Activated T-helper 1 cell treated with anti-CD3 and anti-CD28 coated beads, Interleukin-12 subunit alpha, Interleukin-12 subunit beta, Interleukin-2, Interleukin-4 antibody, amounts not matched to agents 30 ng/mL and 10 ng/mL and 1 ng/mL, durations not matched to agents 14 hours and 24 hours and 36 hours (primary cell): ENCODE measurements at regions of chr7 and their contacts with region 1.

Region 1: GRCh38 chr7:37352974-37353948 is 95.4 kb downstream of the ELMO1 start:
- DNase-seq: peak; percentile 71
- H3K4me3 Mint-ChIP-seq: peak overlapping the region; percentile 93
- H3K27ac Mint-ChIP-seq: peak overlapping the region; percentile 97
- H3K4me1 Mint-ChIP-seq: peaks cover 90% of the 10 kb centered on the region
- H3K27me3 Mint-ChIP-seq: no peaks in the 10 kb centered on the region

Region 2: GRCh38 chr7:36487756-36488336 is 865.4 kb before region 1 on chr7:
- intact Hi-C with region 1: loop called (anchors 5 kb)
- DNase-seq: peak; percentile 26
- H3K4me3 Mint-ChIP-seq: no peak overlapping the region
- H3K27ac Mint-ChIP-seq: no peak overlapping the region
- H3K4me1 Mint-ChIP-seq: peaks cover 5% of the 10 kb centered on the region
- H3K27me3 Mint-ChIP-seq: peaks cover 4% of the 10 kb centered on the region

Region 3: DNA sequence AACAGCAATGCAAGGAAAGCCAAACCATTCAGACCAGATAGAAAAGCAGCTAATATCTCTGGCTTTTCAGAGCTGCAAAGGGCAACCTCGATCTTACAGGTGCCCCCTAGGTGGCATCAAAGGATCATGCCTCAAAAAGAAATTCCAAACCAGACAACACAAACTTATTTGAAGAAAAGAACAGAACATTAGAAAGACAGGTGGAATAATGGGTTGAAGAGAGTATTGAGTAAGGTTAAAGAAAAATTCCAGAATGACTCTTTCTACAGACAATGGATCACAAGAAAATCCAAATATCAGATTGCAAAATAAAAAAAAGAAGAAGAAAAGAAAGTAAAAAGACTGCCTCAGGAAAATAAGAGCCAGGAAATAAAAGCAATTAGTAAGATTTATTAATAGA is 118.3 kb before region 1 on chr7:
- intact Hi-C with region 1: loop called (anchors 1 kb)
- DNase-seq: no peak
- H3K4me3 Mint-ChIP-seq: no peak overlapping the region
- H3K27ac Mint-ChIP-seq: no peak overlapping the region
- H3K4me1 Mint-ChIP-seq: peaks cover 11% of the 10 kb centered on the region
- H3K27me3 Mint-ChIP-seq: no peaks in the 10 kb centered on the region

Region 4: GRCh38 chr7:37342688-37343471 is 10.4 kb before region 1 on chr7:
- intact Hi-C with region 1: loop called (anchors 1 kb)
- DNase-seq: peak; percentile 62
- H3K4me3 Mint-ChIP-seq: peak overlapping the region; percentile 96
- H3K27ac Mint-ChIP-seq: peak overlapping the region; percentile 99
- H3K4me1 Mint-ChIP-seq: peaks cover 76% of the 10 kb centered on the region
- H3K27me3 Mint-ChIP-seq: no peaks in the 10 kb centered on the region

Region 5: DNA sequence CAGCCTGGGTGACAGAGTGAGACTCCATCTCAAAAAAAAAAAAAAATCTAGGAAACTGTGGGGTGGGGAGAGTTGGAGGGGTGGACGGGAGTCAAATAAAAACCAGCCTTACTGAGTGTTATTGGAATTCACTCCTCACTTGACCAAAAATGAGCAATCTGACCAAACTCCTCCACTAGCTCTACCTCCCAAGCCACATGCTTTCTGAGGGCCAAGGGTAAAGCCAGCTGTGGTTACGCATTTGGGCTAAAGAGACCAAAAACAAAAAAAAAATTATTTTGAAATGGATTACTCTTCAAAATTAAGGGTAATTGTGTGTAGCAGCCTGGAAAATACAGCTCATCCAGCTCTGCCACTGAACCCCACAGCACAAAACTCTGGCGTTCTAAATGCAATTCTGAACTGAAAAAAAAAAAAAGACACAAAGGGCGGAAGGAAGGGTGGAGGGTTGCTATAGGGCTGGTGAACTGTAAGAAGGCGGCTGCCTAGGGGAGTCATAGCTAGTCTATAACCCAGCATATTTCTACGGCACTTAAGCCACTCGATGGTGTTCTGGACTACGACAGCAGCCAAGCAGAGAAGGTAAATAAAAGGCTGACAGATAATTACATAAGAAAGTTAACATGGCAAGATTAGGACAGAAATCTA is 87.6 kb after region 1 on chr7:
- intact Hi-C with region 1: loop called (anchors 1 kb)
- DNase-seq: peak; percentile 27
- H3K4me3 Mint-ChIP-seq: peak overlapping the region; percentile 66
- H3K27ac Mint-ChIP-seq: peak overlapping the region; percentile 95
- H3K4me1 Mint-ChIP-seq: peaks cover 64% of the 10 kb centered on the region
- H3K27me3 Mint-ChIP-seq: no peaks in the 10 kb centered on the region

Region 6: GRCh38 chr7:37598824-37599223 is 245.6 kb after region 1 on chr7:
- intact Hi-C with region 1: no loop called
- DNase-seq: no peak
- H3K4me3 Mint-ChIP-seq: no peak overlapping the region
- H3K27ac Mint-ChIP-seq: no peak overlapping the region
- H3K4me1 Mint-ChIP-seq: no peaks in the 10 kb centered on the region
- H3K27me3 Mint-ChIP-seq: peaks cover 8% of the 10 kb centered on the region

Region 7: DNA sequence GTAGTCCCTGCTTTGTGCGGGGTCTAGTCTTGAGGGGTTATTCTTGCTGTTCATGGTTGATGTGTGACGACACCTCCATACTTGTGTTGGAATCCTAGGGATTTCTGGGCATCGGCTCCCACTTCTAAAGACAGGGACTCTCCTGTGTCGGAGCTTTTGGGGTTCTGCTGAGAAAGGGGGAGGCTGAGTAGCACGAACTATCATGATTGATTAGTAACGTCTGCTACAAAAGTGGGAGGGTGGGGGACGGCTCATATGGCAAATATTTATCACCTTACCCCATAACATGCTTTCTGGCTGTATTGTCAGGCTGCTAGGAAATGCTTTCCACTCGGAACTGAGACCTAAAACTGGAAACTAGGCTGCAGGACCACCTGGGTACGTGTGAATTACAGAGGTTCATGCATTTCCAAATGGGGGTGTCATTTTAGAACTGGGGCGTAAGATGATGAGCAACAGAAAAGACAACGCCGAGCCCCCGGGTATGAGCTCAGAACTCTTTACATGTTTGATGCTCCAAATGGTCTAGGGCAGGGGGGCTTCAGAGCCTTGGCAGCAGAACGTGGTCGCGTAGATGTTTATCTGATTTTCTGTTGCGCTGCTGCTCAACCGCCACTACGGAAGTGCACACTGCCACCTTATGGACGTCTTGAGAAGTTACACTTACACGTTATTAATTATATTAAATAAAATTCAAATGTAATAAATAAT is 480.0 kb after region 1 on chr7:
- intact Hi-C with region 1: loop called (anchors 5 kb)
- DNase-seq: no peak
- H3K4me3 Mint-ChIP-seq: peak overlapping the region; percentile 72
- H3K27ac Mint-ChIP-seq: no peak overlapping the region
- H3K4me1 Mint-ChIP-seq: peaks cover 10% of the 10 kb centered on the region
- H3K27me3 Mint-ChIP-seq: peaks cover 12% of the 10 kb centered on the region